ENCODE measurements at regions of chr22 and their contacts with region 1.

Region 1: DNA sequence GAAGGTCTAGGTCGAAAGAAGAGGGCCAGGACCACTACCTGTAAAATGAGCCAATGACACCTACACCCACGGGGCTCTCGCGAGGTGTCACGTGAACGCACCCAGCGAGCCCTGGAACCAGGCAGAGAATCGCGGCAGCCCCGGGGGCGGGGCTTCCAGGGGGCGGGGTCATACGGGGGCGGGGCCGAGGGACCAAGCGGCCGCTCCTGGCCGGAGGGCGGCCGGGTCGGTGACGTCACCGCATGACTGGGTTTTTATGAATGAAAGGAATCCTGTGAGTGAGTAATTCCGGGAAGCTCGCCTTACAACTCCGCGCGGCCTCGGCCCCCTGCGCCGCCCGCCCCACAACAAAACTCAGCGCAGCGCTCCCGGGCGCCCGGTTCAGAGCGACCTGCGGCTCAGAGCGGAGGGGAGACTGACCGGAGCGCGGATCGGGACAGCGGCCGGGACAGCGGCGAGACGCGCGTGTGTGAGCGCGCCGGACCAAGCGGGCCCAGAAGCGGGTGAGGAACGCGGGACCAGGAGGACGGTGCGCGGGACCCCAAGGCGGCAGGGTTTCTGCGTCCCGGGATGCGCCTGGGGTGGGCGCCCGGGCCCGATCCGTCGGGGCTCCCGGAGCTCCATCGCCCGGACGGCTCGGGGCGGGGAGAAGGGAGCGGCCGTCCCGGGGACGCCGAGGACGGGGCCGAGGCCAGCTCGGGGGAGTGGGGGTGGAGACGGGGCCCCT is at the start of gene MAFF:
- DNase-seq: peak; percentile 99
- total RNA-seq, gene MAFF: 22.1 to 72.7 TPM

Region 2: DNA sequence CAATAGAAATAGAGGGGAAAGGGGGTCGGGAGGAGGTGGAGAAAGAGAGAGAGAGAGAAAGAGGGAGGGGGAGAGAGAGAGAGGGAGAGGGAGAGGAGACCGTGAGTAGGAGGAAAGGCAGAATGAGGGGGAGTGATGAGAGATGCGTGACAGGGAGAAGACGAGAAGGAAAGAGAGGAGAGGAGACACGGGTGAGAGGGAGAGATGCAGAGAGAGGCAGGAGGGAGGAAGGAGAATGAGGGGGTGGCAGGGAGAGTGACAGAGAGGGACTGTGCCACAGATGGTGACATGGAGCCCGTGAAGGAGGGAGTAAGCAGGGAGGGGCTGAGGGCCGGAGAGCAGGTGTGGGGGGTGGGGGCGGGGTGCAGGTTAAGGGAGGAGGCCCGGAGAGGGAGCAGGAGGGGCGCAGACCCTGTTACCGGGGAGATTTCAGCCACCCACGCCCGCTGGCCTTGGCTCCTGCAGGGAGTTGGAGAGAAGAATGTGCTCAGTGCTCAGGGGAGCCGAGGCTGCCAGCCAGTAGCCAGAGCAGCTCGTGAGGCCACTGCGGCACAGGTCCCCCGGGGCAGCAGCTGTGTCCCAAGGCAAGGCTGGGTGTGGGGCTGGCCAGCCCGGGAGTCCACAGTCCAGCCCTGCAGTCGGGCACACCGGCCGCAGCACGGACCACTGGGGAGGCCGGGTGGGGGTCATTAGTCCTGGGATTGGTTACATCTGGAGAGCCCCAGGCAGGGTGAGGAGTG is 989.5 kb before region 1 on chr22 and contains the start of gene SSTR3:
- intact Hi-C with region 1: no loop called
- DNase-seq: peak; percentile 70
- total RNA-seq, gene SSTR3: not detected

Region 3: DNA sequence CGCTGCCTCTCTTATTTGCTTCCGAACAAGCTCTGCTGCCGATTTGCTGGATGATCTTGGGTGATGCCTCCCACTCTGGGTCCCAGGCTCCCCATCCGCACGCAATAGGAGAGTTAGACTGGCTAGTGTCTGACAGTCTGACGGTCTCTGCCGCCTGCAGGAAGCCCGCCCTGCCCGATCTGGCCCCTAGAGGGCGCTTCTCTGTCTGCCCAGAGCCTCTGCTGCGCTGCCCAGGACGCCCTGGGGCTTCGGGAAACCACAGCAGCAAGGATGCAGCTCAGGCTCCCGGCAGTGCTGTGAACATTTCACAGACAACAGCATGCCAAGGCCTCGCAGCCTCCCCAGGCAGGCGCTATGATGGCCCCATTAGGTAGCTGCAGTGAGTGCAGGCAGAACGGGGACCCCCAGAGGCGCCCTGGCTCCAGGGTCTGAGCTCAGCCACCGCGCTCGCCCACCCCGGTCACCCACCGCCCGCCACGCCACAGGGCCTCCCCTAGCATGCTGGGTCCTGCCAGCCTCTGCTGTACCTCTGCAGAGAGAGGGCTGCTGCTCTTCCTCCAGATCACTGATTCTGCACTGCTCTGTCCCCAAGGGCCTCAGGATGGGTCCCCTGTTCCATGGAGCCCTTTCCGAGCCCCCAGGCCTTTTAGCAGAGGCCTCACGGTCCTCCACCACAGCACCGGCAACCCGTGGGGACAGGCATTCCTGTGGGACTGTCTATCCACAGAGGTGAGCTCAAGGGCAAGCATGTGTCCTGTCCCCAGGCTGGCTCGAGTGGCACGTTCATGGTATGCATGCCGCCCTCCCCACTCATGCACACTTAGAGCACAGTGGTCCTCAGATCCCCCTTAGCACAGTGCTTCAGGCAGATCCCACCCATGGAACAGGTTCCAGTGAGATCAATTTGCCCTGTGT is 87.1 kb before region 1 on chr22:
- intact Hi-C with region 1: loop called in 1 of 2 experiments (anchors 5 kb)
- DNase-seq: peak; percentile 96

Region 4: GRCh38 chr22:38317122-38317994 is 115.5 kb after region 1 on chr22 and contains the start of gene CSNK1E:
- intact Hi-C with region 1: loop called in 1 of 2 experiments (anchors 10 kb)
- DNase-seq: peak; percentile 93
- total RNA-seq, gene CSNK1E: 70.1 to 88.6 TPM